Cardiac septum (tissue), 1 donor: ENCODE measurements at regions of chr7 and their contacts with region 1.

Region 1: DNA sequence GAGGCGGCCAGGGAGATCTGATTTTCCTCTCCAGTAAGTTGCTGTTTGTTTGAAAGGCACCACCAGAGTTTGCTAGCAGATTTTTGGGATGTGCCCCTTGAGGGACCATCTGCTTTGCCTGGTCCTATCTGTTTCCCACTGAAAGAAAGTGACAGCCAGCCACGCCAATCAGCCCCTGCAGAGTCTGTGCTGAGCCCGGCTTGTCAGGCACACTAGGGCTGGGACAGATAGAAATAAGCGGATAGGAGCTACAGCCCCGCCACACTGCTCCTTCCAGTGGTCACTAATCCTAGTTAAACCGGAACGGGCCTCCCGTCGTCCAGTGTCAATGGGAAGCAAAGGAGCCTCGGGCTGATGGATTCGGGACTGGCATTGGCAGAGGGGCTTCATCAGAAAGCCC is 161.9 kb upstream of the PRR15 start:
- DNase-seq: no peak

Region 2: GRCh38 chr7:29035044-29035740 is 366.6 kb before region 1 on chr7:
- intact Hi-C with region 1: no loop called
- DNase-seq: no peak

Region 3: GRCh38 chr7:29113384-29114103 is 288.2 kb before region 1 on chr7:
- intact Hi-C with region 1: loop called (anchors 5 kb)
- DNase-seq: no peak